Left ventricle myocardium inferior (tissue), 1 donor: ENCODE measurements at regions of chr1 and their contacts with region 1.

Region 1: GRCh38 chr1:204162231-204163074 is 3.7 kb downstream of the REN start:
- DNase-seq: peak; percentile 78
- H3K4me3 ChIP-seq: no peak overlapping the region
- H3K27ac ChIP-seq: no peak overlapping the region
- H3K4me1 ChIP-seq: no peaks in the 10 kb centered on the region
- H3K27me3 ChIP-seq: peaks cover 42% of the 10 kb centered on the region
- CTCF ChIP-seq: peak; percentile 100

Region 2: GRCh38 chr1:204207136-204207616 is 44.7 kb after region 1 on chr1:
- intact Hi-C with region 1: loop called (anchors 2 kb)
- DNase-seq: peak; percentile 55
- H3K4me3 ChIP-seq: no peak overlapping the region
- H3K27ac ChIP-seq: no peak overlapping the region
- H3K4me1 ChIP-seq: peaks cover 4% of the 10 kb centered on the region
- H3K27me3 ChIP-seq: peaks cover 45% of the 10 kb centered on the region
- CTCF ChIP-seq: peak; percentile 95

Region 3: GRCh38 chr1:204350857-204351573 is 188.6 kb after region 1 on chr1:
- intact Hi-C with region 1: no loop called
- DNase-seq: peak; percentile 81
- H3K4me3 ChIP-seq: peak overlapping the region; percentile 11
- H3K27ac ChIP-seq: peak overlapping the region; percentile 28
- H3K4me1 ChIP-seq: peaks cover 38% of the 10 kb centered on the region
- H3K27me3 ChIP-seq: no peaks in the 10 kb centered on the region
- CTCF ChIP-seq: no peak

Region 4: GRCh38 chr1:204363335-204364124 is 201.1 kb after region 1 on chr1:
- intact Hi-C with region 1: loop called (anchors 2 kb)
- DNase-seq: peak; percentile 73
- H3K4me3 ChIP-seq: peak overlapping the region; percentile 65
- H3K27ac ChIP-seq: peak overlapping the region; percentile 88
- H3K4me1 ChIP-seq: peaks cover 52% of the 10 kb centered on the region
- H3K27me3 ChIP-seq: peaks cover 3% of the 10 kb centered on the region
- CTCF ChIP-seq: peak; percentile 98

Region 5: GRCh38 chr1:204398217-204399081 is 236.0 kb after region 1 on chr1:
- intact Hi-C with region 1: loop called (anchors 10 kb)
- DNase-seq: no peak
- H3K4me3 ChIP-seq: no peak overlapping the region
- H3K27ac ChIP-seq: no peak overlapping the region
- H3K4me1 ChIP-seq: peaks cover 4% of the 10 kb centered on the region
- H3K27me3 ChIP-seq: no peaks in the 10 kb centered on the region
- CTCF ChIP-seq: peak; percentile 87